CD8-positive, alpha-beta memory T cell (primary cell): ENCODE measurements at regions of chr5 and their contacts with region 1.

Region 1: GRCh38 chr5:151051066-151051930 is 29.5 kb downstream of the TNIP1 start:
- DNase-seq: peak; percentile 49 to 81 (median 57)
- H3K4me3 ChIP-seq: no peak overlapping the region
- H3K4me3 Mint-ChIP-seq: no peak overlapping the region
- H3K27ac ChIP-seq: no peak overlapping the region
- H3K27ac Mint-ChIP-seq: peak overlapping the region in 5 of 8 donors; percentile 54 to 79 (median 74)
- H3K4me1 ChIP-seq: no peaks in the 10 kb centered on the region
- H3K4me1 Mint-ChIP-seq: peaks cover 9 to 23% (median 17%) of the 10 kb centered on the region in 3 donors
- H3K27me3 ChIP-seq: no peaks in the 10 kb centered on the region
- H3K27me3 Mint-ChIP-seq: no peaks in the 10 kb centered on the region

Region 2: DNA sequence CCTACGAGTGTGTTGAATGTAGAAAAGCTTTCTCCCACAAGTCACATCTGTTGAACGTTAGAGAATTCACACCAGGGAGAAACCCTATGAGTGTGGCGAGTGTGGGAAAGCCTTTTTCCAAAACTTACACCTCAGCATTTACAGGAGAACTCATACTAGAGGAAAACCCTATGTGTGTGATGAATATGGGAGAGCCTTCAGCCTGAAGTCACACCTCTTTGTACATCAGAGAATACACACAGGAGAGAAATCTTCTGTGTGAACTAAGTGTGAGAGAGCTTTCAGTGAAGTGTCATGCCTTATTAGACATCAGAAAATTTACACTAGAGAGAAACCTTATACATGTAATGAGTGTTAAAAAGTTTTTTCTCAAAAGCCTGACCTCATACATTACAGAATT is 72.7 kb before region 1 on chr5:
- CTCF ChIA-PET with region 1: no interaction called
- POLR2A ChIA-PET with region 1: no interaction called
- DNase-seq: no peak
- H3K4me3 ChIP-seq: no peak overlapping the region
- H3K4me3 Mint-ChIP-seq: no peak overlapping the region
- H3K27ac ChIP-seq: no peak overlapping the region
- H3K27ac Mint-ChIP-seq: no peak overlapping the region
- H3K4me1 ChIP-seq: no peaks in the 10 kb centered on the region
- H3K4me1 Mint-ChIP-seq: no peaks in the 10 kb centered on the region
- H3K27me3 ChIP-seq: no peaks in the 10 kb centered on the region
- H3K27me3 Mint-ChIP-seq: peaks cover 0 to 22% of the 10 kb centered on the region in 2 donors

Region 3: DNA sequence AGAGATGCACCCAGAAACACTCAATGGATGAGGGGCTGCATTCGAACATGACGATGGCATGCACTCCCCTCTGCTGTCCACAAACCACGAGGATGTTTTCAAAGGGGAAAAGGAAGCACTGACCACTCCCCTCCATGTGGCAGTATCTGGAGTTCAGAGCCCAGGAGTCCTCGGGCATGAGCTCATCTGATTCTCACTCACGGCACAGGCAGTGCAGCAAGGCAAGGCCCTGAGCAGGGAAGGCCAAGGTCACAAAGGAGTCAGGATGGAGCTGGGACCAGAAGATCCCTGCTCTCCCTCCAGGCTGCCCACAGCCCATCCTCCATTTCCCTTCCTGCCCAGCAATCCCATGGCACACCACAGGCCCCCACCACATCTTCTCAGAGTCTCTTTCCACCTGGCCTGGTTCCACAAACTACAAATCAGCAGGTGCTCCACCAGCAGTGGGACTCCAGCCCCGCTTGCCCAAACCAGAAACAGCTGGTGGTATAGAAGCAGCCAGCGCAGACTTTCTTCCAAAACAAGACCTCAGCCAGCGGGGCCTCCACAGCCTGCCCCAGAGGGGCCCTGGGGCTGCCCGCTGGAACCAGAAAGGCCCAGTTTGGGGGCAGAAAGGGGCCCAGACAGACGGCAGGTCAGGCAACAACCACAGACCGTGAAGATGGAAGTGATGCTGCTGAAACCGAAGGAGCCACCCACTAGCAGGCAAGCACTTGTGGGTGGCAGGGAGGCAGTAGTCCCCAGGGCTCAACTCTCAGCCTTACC is 17.3 kb after region 1 on chr5:
- CTCF ChIA-PET with region 1: interaction called, 16 read pairs
- POLR2A ChIA-PET with region 1: no interaction called
- DNase-seq: no peak
- H3K4me3 ChIP-seq: no peak overlapping the region
- H3K4me3 Mint-ChIP-seq: peak overlapping the region in 6 of 7 donors; percentile 24 to 87 (median 45)
- H3K27ac ChIP-seq: no peak overlapping the region
- H3K27ac Mint-ChIP-seq: peak overlapping the region; percentile 53 to 93 (median 86)
- H3K4me1 ChIP-seq: peaks cover 63% of the 10 kb centered on the region
- H3K4me1 Mint-ChIP-seq: peaks cover 69 to 92% (median 85%) of the 10 kb centered on the region in 3 donors
- H3K27me3 ChIP-seq: no peaks in the 10 kb centered on the region
- H3K27me3 Mint-ChIP-seq: no peaks in the 10 kb centered on the region

Region 4: DNA sequence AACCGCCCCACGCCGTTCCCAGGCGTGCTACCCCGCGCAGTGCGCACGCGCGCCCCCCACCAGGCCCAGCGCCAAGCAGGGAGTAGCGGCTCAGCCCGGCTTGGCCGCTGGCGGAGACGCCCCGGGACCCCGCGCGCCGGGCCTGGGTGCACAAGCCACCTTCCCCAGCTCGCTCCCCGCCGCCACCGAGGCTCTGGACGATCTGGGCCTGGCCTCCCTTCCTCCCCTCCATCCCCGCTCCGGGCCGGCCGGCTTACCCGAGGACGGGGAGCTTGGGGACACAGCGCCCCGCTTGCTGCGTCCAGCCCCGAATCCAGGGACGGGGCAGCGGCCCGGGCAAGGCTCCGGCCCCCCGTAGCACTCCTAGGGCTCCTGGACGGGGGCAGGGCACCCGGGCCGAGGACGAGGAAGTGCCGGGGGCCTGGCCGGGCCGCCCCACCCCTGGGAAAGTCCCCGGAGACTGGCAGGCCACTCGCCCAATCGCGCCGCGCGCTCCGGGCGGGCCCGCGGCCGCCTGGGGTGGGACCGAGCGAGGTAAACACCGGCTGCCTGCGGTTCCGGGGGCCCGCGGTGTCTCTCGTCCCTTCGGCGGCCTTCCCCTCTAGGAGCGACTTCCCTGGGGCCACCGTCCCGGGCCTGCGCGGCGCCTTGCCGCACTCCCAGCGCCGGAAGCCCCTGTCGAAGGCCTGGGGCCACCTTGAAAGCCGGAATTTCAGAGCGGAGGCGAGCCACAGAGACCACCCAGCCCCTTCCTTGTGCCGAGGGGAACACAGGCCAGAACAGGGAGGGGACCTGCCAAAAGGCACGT is 29.5 kb after region 1 on chr5 and contains the start of gene TNIP1:
- CTCF ChIA-PET with region 1: interaction called, 16 read pairs
- POLR2A ChIA-PET with region 1: no interaction called
- DNase-seq: peak; percentile 90 to 95 (median 93)
- H3K4me3 ChIP-seq: peak within 1 kb of the TSS; percentile 93
- H3K4me3 Mint-ChIP-seq: peak within 1 kb of the TSS; percentile 83 to 96 (median 90)
- H3K27ac ChIP-seq: peak within 1 kb of the TSS; percentile 97
- H3K27ac Mint-ChIP-seq: peak within 1 kb of the TSS; percentile 82 to 99 (median 96)
- H3K4me1 ChIP-seq: peaks cover 84% of the 10 kb centered on the region
- H3K4me1 Mint-ChIP-seq: peaks cover 75 to 91% (median 86%) of the 10 kb centered on the region in 3 donors
- H3K27me3 ChIP-seq: no peaks in the 10 kb centered on the region
- H3K27me3 Mint-ChIP-seq: no peaks in the 10 kb centered on the region
- total RNA-seq, gene TNIP1: 212 to 213 TPM

Region 5: DNA sequence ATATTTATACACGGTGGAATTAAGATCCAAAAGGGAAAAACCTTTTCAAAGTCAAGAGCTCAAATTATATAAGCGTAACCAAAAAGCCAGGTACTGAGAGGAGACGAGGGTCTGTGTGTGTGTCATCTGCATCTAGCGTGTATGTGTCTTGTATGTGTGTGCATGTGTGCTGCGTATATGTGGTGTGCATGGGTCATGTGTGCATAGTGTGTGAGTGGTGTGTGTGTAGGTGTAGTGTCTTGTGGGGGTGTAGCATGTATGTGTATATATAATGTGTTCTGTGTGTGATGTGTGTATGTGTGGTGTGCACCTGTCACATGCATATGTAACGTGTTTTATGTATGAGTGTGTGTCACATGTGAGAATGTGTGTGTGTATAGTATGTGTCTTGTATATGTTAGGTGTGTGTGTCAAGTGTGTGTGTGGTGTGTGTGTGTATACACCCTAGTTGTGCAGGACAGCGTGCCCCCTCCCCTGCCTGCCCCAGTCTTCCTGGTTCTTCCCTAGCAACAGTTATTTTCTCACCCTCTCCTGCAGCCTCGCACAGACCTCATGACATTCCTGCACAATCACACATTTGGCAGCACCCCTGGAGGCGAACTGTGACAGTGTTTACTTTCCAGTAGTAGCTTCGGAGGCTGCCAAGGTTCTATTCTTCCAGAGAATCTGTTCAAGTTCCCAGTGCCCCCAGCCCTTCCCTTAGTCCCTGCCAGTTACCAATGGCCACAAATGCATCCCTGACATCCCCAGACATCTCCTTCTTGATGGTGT is 56.6 kb after region 1 on chr5:
- CTCF ChIA-PET with region 1: interaction called, 17 read pairs
- POLR2A ChIA-PET with region 1: no interaction called
- DNase-seq: peak in 1 of 5 donors; percentile 15
- H3K4me3 ChIP-seq: no peak overlapping the region
- H3K4me3 Mint-ChIP-seq: no peak overlapping the region
- H3K27ac ChIP-seq: no peak overlapping the region
- H3K27ac Mint-ChIP-seq: peak overlapping the region in 7 of 8 donors; percentile 36 to 89 (median 48)
- H3K4me1 ChIP-seq: no peaks in the 10 kb centered on the region
- H3K4me1 Mint-ChIP-seq: peaks cover 4 to 10% (median 4%) of the 10 kb centered on the region in 3 donors
- H3K27me3 ChIP-seq: no peaks in the 10 kb centered on the region
- H3K27me3 Mint-ChIP-seq: no peaks in the 10 kb centered on the region